GM18951 (cell line): ENCODE measurements at regions of chr1 and their contacts with region 1.

Region 1: DNA sequence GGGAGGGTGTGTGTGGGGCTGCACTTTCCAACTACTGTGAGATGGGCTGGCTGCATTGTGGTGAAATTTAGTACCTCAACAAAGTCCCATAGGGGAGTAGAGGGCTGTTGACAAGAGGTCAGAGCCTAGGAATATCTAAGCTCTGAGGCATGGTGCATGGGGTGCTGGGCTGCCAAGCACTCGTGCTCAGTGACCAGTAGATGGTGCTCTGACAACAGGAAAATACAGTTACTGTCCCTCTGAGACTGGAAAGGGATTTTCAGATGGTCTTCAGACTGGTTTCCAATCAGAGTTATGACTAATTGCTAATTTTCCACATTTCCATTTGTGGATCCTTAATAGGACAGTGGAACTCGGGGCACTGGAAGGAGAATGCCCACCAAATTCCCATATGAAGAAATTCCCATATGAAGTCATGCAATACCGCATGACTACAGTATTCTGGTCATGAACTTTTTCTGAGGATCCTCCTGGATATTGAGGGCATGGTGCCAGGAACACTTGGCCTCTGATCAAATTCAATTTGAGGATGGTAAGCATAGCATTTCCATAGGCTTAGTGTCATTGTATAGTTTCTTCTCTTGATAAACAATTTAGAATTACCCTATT is 4.1 kb upstream of the CACNA1E start:
- POLR2A ChIP-seq: no peak

Region 2: DNA sequence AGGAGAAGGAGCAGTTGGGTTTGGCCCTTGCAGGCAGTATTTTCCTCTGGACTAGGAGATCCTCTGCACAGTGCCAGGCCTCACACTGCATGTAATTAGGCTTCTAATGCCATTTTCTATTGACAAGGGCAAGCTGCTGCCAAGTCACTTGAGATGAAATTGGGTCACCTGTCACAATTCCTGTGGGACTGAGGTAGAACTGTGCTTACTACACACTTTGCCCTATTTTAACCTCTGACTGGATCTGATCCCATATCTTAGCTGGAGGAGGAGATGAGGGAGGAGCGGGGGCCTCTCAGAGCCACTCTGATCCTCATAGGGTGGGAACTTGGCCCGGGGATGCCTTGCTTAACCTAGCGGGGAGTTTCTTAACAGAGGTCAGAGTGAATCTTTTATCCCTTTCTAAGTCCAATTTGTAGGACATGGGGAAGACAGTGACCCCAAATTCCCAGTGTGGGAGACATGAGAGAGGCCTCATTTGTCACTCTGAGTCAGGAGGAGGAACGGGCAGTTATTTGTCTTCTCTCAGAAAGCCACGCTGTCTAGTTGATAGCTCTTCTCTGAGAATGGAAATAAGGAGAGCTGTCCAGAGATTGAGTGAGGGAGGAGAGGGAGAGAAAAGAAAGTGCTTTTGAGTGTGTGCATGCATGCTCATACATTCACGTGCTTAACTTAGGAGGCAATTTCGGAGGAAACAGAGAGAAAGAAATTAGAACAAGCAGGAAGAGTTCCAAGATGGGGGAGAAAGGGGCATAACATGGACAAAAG is 125.4 kb after region 1 on chr1:
- in situ Hi-C with region 1: no loop called
- POLR2A ChIP-seq: no peak

Region 3: DNA sequence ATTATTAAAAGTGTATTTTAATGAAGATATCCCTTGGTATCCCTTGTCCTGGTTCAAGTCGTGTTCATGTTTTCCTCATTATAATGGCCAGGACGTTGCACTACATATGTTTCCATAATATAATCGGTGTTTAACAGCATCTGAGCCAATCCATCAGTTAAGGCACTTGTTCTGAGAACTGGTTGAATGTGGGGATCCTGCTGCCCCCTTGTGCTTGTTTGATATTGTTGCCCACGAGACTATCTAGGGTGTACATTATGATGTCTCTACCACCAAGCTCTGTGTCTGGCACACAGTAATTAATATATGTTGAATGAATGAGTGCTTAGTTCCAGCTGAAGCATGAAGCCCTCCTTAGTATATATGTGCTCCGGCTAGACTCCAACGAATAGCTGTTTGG is 197.0 kb after region 1 on chr1:
- in situ Hi-C with region 1: loop called (anchors 10 kb)
- POLR2A ChIP-seq: no peak

Region 4: GRCh38 chr1:182069028-182069466 is 589.8 kb after region 1 on chr1:
- in situ Hi-C with region 1: loop called (anchors 25 kb)
- POLR2A ChIP-seq: no peak